HCT116 (cell line): ENCODE measurements at regions of chr17 and their contacts with region 1.

Region 1: GRCh38 chr17:1661045-1661444 is 11.4 kb upstream of the RILP start:
- DNase-seq: no peak
- ATAC-seq: no peak
- H3K4me3 ChIP-seq: no peak overlapping the region
- H3K27ac ChIP-seq: no peak overlapping the region
- H3K4me1 ChIP-seq: no peaks in the 10 kb centered on the region
- H3K27me3 ChIP-seq: no peaks in the 10 kb centered on the region
- CTCF ChIP-seq: no peak
- POLR2A ChIP-seq: no peak
- RAD21 ChIP-seq: no peak

Region 2: DNA sequence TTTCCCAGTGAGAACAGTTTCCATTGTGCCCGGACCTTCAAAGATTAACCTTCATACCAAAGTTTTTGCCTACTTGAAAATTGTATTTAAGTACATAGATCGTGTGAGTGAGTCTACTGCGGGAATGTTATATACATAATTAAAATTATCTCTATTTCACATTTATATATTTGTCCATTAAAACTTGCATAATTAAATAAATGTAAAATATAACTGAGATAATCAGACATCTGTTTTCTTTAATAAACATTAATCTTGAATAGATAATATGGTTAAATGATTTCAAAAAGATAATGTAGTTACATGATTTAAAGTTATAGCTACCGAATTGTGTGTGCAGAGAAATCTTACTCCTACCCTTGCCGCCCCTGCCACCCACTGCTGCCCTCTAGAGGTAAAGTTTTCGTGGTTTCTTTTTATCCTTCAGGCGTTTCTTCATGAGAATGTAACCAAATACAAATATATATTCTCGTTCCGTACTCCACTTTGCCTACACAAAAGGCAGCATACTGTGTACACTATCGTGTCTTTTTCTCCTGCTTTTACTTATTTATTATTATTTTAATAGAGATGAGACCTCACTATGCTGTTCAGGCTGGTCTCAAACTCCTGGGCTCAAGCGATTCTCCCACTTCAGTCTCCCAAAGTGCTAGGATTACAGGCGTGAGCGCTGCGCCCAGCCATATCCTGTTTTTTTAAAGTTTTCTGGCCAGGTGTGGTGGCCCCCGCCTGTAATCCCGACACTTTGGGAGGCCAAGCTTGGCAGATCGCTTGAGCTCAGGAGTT is 204.4 kb after region 1 on chr17:
- CTCF ChIA-PET with region 1: no interaction called
- POLR2A ChIA-PET with region 1: no interaction called
- RAD21 ChIA-PET with region 1: no interaction called
- intact Hi-C with region 1: loop called (anchors 10 kb)
- DNase-seq: peak; percentile 4
- ATAC-seq: peak; percentile 78
- H3K4me3 ChIP-seq: no peak overlapping the region
- H3K27ac ChIP-seq: no peak overlapping the region
- H3K4me1 ChIP-seq: no peaks in the 10 kb centered on the region
- H3K27me3 ChIP-seq: no peaks in the 10 kb centered on the region
- CTCF ChIP-seq: peak; percentile 64 to 74 (median 67); a peak in 5 of 6 replicates
- POLR2A ChIP-seq: no peak
- RAD21 ChIP-seq: peak; percentile 67